ENCODE measurements at regions of chr17 and their contacts with region 1.

Region 1: DNA sequence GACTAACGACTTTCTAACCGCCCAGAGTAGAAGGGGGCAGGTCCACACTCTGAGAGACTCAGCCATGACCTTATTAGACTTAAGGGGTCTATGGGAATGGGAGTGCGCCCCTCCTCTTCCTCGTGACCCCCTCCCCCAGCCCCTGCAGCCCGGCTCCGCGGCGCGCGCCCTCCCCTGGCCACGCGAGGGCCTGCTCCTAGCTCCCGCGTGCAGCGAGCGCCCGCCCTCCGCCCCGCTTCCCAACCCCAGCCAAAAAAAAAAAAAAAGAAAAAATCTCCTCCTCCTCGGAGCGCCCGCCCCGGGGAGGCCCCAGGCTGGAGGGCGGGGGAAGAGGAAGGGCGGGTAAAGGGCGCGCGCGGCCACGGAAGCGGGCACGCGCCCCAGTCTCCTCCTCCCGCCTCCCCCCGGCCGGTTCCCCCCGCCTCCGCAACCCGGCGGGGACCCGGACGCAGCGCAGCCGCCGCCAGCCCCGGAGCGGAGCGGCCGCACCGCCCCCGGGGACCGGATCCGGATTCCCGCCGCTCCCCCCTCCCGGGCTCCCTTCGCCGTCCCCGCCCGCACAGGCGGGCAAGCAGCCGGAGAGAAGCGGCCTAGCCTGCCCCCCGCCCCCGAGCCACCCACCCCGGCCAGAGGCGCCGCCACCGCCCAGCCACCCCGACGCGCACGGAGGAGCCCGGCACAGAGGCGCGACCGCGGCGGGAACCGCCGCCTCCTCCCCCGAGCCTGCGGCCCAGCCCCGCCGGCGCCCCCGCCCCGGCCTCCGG is 949 bp downstream of the UBTF start:
- ATAC-seq: peak; percentile 12 to 62 (median 44)
- H3K4me3 ChIP-seq: peak overlapping the region; percentile 60 to 97 (median 86)
- H3K27ac ChIP-seq: peak overlapping the region; percentile 92 to 97
- H3K4me1 ChIP-seq: peaks cover 15 to 17% of the 10 kb centered on the region in 2 donors

Region 2: DNA sequence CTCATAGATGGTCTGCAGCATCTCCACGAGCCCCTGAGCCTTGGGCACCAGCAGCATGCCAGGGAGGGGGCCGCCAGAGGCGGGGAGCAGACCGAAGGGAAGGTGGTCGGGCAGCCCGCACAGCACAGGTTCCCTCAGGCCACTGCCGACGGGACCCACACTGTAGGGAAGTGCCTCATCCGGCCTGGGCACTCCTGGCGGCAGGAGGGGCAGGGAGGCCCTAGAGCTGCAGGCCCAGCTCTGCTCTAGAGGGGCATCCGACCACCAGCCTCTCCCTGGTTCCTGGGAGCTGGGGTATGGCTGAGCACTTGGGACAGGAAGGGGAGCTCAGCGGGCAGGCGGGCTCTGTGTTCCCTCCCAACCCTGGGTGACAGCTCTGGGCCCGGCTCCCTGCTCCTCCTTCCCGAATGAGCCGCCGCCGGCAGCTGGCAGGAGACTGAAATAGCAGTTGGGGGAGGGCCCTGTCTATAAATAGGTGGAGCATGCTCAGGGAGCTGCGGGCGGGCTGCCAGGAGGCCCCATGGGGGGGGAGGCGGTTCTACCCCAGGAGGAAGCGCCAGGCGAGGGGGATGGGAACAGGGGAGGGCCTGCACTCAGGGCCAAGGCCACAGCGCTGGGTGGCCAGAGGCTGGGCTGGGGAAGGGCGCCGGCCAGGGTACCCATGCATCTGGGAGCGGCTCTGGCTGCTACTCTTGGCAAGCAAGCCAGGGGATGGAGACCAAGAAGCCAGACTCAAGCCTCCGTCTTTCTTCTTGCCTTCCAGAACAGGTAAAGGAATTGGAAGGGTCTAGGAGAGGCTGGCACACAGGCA is 107.5 kb before region 1 on chr17:
- in situ Hi-C with region 1: no loop called
- ATAC-seq: peak; percentile 87 to 97 (median 90)
- H3K4me3 ChIP-seq: peak overlapping the region in 3 of 5 donors; percentile 3 to 13 (median 13)
- H3K27ac ChIP-seq: peak overlapping the region; percentile 26 to 31
- H3K4me1 ChIP-seq: peaks cover 29 to 34% of the 10 kb centered on the region in 2 donors

Region 3: GRCh38 chr17:44308320-44308818 is 89.8 kb after region 1 on chr17 and contains the start of gene RUNDC3A:
- in situ Hi-C with region 1: loop called in 2 of 9 experiments (anchors 10 kb)
- ATAC-seq: peak; percentile 88 to 94 (median 92)
- H3K4me3 ChIP-seq: peak within 1 kb of the TSS; percentile 40 to 60 (median 56)
- H3K27ac ChIP-seq: peak within 1 kb of the TSS; percentile 71 to 86
- H3K4me1 ChIP-seq: peaks cover 20 to 34% of the 10 kb centered on the region in 2 donors
- total RNA-seq, gene RUNDC3A: 1.8 to 84.1 (median 49.1) TPM

Region 4: GRCh38 chr17:44314869-44315661 is 96.5 kb after region 1 on chr17:
- in situ Hi-C with region 1: loop called in 5 of 9 experiments (anchors 10 kb)
- ATAC-seq: peak; percentile 58 to 82 (median 62)
- H3K4me3 ChIP-seq: peak overlapping the region; percentile 14 to 29 (median 22)
- H3K27ac ChIP-seq: no peak overlapping the region
- H3K4me1 ChIP-seq: peaks cover 22 to 32% of the 10 kb centered on the region in 2 donors

Region 5: DNA sequence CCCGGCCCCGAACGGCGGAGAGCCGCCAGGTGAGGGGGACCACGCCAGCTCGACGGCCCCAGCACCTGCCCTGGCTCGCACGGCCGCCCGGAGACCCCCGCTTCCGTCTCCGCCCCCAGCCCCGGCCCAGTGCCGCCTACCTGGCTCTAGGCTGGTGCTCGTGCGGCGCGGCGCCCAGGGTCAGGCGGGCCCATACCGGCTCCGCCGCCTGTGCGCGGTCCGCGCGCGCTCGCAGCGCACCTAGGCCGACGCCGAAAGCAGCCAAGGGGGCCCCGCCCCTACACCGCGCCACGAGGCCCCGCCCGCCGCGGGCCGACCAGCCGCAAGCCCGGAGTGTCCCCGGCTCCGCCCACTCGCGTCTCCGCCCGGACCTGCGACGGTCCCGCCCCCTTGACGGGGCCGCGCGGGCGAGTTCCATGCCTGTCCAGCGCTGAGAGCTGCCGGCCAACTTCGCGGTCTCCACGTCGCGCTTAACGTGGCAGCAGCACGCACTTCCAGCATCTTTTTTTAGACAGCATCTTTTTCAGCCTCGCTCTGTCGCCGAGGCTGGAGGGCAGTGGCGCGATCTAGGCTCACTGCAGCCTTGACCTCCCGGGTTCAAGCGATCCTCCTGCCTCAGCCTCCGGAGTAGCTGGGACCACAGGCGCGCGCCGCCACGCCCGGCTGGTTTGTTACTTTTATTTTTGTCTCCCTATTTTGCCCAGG is 106.2 kb after region 1 on chr17 and contains the start of gene SLC25A39:
- in situ Hi-C with region 1: loop called in 8 of 9 experiments (anchors 10 to 25 kb)
- ATAC-seq: peak; percentile 61 to 83 (median 81)
- H3K4me3 ChIP-seq: peak within 1 kb of the TSS; percentile 78 to 97 (median 86)
- H3K27ac ChIP-seq: peak within 1 kb of the TSS; percentile 35 to 65
- H3K4me1 ChIP-seq: peaks cover 4 to 11% of the 10 kb centered on the region in 2 donors
- total RNA-seq, gene SLC25A39: 28.7 to 148 (median 56.1) TPM